MCF 10A (cell line): ENCODE measurements at regions of chr12 and their contacts with region 1.

Region 1: GRCh38 chr12:83823431-83823963 is 1089.1 kb downstream of the SLC6A15 start:
- DNase-seq: peak; percentile 73
- H3K4me3 Mint-ChIP-seq: no peak overlapping the region
- H3K27ac Mint-ChIP-seq: no peak overlapping the region
- H3K4me1 Mint-ChIP-seq: peaks cover 7% of the 10 kb centered on the region
- H3K27me3 Mint-ChIP-seq: no peaks in the 10 kb centered on the region
- CTCF ChIP-seq: peak; percentile 49

Region 2: GRCh38 chr12:82527165-82527780 is 1296.2 kb before region 1 on chr12:
- CTCF ChIA-PET with region 1: interaction called, 10 read pairs
- POLR2A ChIA-PET with region 1: no interaction called
- intact Hi-C with region 1: loop called (anchors 2 kb)
- DNase-seq: peak; percentile 79
- H3K4me3 Mint-ChIP-seq: no peak overlapping the region
- H3K27ac Mint-ChIP-seq: no peak overlapping the region
- H3K4me1 Mint-ChIP-seq: no peaks in the 10 kb centered on the region
- H3K27me3 Mint-ChIP-seq: peaks cover 11% of the 10 kb centered on the region
- CTCF ChIP-seq: peak; percentile 83

Region 3: GRCh38 chr12:83005534-83006197 is 817.8 kb before region 1 on chr12:
- CTCF ChIA-PET with region 1: interaction called, 5 read pairs
- POLR2A ChIA-PET with region 1: no interaction called
- intact Hi-C with region 1: loop called (anchors 2 kb)
- DNase-seq: no peak
- H3K4me3 Mint-ChIP-seq: no peak overlapping the region
- H3K27ac Mint-ChIP-seq: no peak overlapping the region
- H3K4me1 Mint-ChIP-seq: no peaks in the 10 kb centered on the region
- H3K27me3 Mint-ChIP-seq: no peaks in the 10 kb centered on the region
- CTCF ChIP-seq: no peak

Region 4: DNA sequence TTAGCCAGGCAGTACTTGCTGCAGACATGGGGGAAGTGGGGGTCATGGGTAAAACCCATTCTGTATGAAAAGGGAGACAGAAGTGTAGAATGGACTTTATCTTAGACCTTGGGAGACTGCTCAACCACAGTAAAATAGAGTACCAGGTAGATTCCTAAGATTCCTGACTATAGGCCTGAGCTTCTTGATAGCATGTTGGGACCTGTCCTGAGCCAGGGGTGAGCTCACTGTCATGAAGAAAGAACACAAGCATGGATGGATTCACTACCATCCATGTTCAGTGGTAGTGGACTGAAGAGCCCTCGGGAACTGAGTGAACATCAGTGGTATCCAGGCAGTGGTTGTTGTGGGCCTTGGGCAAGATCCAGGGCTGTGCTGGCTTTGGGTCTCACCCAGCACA is 133.0 kb before region 1 on chr12:
- CTCF ChIA-PET with region 1: no interaction called
- POLR2A ChIA-PET with region 1: no interaction called
- intact Hi-C with region 1: no loop called
- DNase-seq: peak; percentile 6
- H3K4me3 Mint-ChIP-seq: no peak overlapping the region
- H3K27ac Mint-ChIP-seq: no peak overlapping the region
- H3K4me1 Mint-ChIP-seq: no peaks in the 10 kb centered on the region
- H3K27me3 Mint-ChIP-seq: no peaks in the 10 kb centered on the region
- CTCF ChIP-seq: no peak

Region 5: DNA sequence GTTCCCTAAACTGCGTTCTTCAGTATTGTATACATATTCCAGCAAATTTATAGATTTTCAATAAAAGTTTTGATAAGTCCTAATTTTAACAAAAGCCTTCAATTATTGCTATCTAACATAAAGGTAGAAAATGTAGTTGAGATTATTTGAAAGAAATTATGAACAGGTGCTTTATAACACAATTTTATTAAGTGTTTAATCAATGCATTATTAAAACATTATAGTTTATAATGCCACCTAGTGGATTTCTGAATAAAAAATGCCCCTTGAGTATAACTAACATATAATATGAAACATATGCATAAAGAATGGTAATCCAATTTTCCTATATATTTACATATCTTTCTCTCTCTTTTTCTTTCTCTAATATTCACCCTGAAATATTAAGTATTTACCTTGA is 573.8 kb after region 1 on chr12:
- CTCF ChIA-PET with region 1: interaction called, 19 read pairs
- POLR2A ChIA-PET with region 1: no interaction called
- intact Hi-C with region 1: no loop called
- DNase-seq: peak; percentile 12
- H3K4me3 Mint-ChIP-seq: no peak overlapping the region
- H3K27ac Mint-ChIP-seq: no peak overlapping the region
- H3K4me1 Mint-ChIP-seq: no peaks in the 10 kb centered on the region
- H3K27me3 Mint-ChIP-seq: no peaks in the 10 kb centered on the region
- CTCF ChIP-seq: peak; percentile 36

Region 6: GRCh38 chr12:84502907-84503787 is 679.6 kb after region 1 on chr12:
- CTCF ChIA-PET with region 1: no interaction called
- POLR2A ChIA-PET with region 1: no interaction called
- intact Hi-C with region 1: loop called (anchors 2 kb)
- DNase-seq: peak; percentile 76
- H3K4me3 Mint-ChIP-seq: no peak overlapping the region
- H3K27ac Mint-ChIP-seq: no peak overlapping the region
- H3K4me1 Mint-ChIP-seq: peaks cover 23% of the 10 kb centered on the region
- H3K27me3 Mint-ChIP-seq: no peaks in the 10 kb centered on the region
- CTCF ChIP-seq: peak; percentile 51

Region 7: GRCh38 chr12:84842406-84843013 is 1019.0 kb after region 1 on chr12:
- CTCF ChIA-PET with region 1: interaction called, 8 read pairs
- POLR2A ChIA-PET with region 1: no interaction called
- intact Hi-C with region 1: loop called (anchors 10 kb)
- DNase-seq: peak; percentile 59
- H3K4me3 Mint-ChIP-seq: no peak overlapping the region
- H3K27ac Mint-ChIP-seq: no peak overlapping the region
- H3K4me1 Mint-ChIP-seq: no peaks in the 10 kb centered on the region
- H3K27me3 Mint-ChIP-seq: no peaks in the 10 kb centered on the region
- CTCF ChIP-seq: peak; percentile 59